K562 (cell line): ENCODE measurements at regions of chr3 and their contacts with region 1.

Region 1: GRCh38 chr3:31981206-31982181 is at the starts of genes OSBPL10 and ZNF860:
- DNase-seq: peak in 3 of 4 experiments; percentile 13 to 28 (median 16)
- ATAC-seq: peak; percentile 69
- H3K4me3 ChIP-seq: no peak within 1 kb of the TSS
- H3K27ac ChIP-seq: no peak within 1 kb of the TSS
- H3K4me1 ChIP-seq: peaks cover 0 to 14% of the 10 kb centered on the region in 2 experiments; a peak in 2 of 5 replicates
- H3K27me3 ChIP-seq: peaks cover 16 to 29% of the 10 kb centered on the region in 2 experiments
- CTCF ChIP-seq: no peak
- EP300 ChIP-seq: no peak
- POLR2A ChIP-seq: no peak
- RAD21 ChIP-seq: no peak
- polyA plus RNA-seq, gene OSBPL10: 0.07 to 0.15 TPM
- polyA plus RNA-seq, gene ZNF860: not detected

Region 2: DNA sequence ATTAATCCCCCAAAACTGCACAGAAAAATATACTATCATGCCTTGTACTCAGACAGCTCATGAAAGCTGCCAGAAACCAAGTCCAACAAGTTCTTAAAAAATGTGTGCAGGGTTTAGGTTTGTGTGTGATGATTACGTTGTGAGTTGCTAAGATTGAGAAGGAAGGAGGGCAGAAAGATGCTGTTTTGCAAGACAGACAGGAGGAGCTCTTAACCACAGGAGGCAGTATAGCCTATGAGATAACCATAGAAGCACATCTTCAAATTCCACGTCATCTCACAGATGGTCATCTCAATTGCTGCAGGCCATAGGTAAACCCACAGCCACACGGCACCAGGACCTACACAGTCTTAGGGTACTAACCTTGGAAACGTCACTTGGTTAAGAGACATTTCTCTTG is 256.8 kb before region 1 on chr3:
- CTCF ChIA-PET with region 1: no interaction called
- POLR2A ChIA-PET with region 1: no interaction called
- in situ Hi-C with region 1: no loop called
- intact Hi-C with region 1: loop called (anchors 10 kb)
- DNase-seq: peak in 2 of 4 experiments; percentile 20 to 25
- ATAC-seq: peak; percentile 90
- H3K4me3 ChIP-seq: no peak overlapping the region
- H3K27ac ChIP-seq: no peak overlapping the region
- H3K4me1 ChIP-seq: no peaks in the 10 kb centered on the region
- H3K27me3 ChIP-seq: peaks cover 2 to 3% of the 10 kb centered on the region in 2 experiments; a peak in 3 of 5 replicates
- CTCF ChIP-seq: peak; percentile 30 to 53 (median 53)
- EP300 ChIP-seq: no peak
- POLR2A ChIP-seq: no peak
- RAD21 ChIP-seq: peak in 1 of 2 experiments; percentile 50; a peak in 3 of 4 replicates

Region 3: GRCh38 chr3:31960793-31961431 is 20.6 kb before region 1 on chr3:
- CTCF ChIA-PET with region 1: no interaction called
- POLR2A ChIA-PET with region 1: no interaction called
- in situ Hi-C with region 1: no loop called
- intact Hi-C with region 1: no loop called
- DNase-seq: no peak
- ATAC-seq: no peak
- H3K4me3 ChIP-seq: no peak overlapping the region
- H3K27ac ChIP-seq: no peak overlapping the region
- H3K4me1 ChIP-seq: no peaks in the 10 kb centered on the region
- H3K27me3 ChIP-seq: peaks cover 0 to 2% of the 10 kb centered on the region in 2 experiments; a peak in 1 of 5 replicates
- CTCF ChIP-seq: no peak
- EP300 ChIP-seq: no peak
- POLR2A ChIP-seq: no peak
- RAD21 ChIP-seq: no peak